ENCODE measurements at regions of chr17 and their contacts with region 1.

Region 1: GRCh38 chr17:55527540-55528118 is 16.4 kb upstream of the SMIM36 start:
- DNase-seq: peak; percentile 17 to 21
- H3K4me3 ChIP-seq: no peak overlapping the region
- H3K27ac ChIP-seq: no peak overlapping the region
- H3K4me1 ChIP-seq: no peaks in the 10 kb centered on the region
- H3K27me3 ChIP-seq: no peaks in the 10 kb centered on the region
- CTCF ChIP-seq: peak in 4 of 6 experiments; percentile 24 to 49 (median 41)
- POLR2A ChIP-seq: no peak

Region 2: DNA sequence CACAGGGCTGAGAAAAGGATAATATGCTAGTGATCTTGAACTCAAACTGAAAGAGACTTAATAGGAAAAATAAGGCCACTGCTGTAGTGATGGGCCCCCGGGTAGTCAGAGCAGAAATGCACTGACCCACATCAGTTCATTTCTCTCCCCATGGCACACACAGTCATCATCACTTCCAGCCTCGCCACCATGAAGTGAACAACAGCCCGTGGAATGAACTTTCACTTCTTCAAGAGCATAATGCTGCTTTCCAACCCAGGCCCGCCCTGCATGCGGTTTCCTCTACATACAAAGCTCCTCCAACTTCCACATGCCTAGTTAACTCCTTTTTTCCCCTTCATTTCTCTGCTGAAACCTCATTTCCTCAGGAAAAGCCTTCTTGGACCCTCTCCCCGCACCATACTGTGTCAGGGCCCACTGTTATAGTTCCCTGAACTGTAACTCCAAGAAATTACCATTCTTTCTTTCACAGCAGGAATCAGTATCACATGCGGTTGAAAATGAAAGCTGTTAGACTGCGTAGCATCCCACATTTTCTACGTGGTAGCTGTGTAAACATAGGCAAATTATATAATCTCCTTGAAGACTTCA is 49.5 kb after region 1 on chr17:
- intact Hi-C with region 1: no loop called
- DNase-seq: peak; percentile 6 to 14
- H3K4me3 ChIP-seq: no peak overlapping the region
- H3K27ac ChIP-seq: peak overlapping the region; percentile 39 to 69 (median 60)
- H3K4me1 ChIP-seq: peaks cover 0 to 5% of the 10 kb centered on the region in 2 donors
- H3K27me3 ChIP-seq: no peaks in the 10 kb centered on the region
- CTCF ChIP-seq: no peak
- POLR2A ChIP-seq: no peak

Region 3: DNA sequence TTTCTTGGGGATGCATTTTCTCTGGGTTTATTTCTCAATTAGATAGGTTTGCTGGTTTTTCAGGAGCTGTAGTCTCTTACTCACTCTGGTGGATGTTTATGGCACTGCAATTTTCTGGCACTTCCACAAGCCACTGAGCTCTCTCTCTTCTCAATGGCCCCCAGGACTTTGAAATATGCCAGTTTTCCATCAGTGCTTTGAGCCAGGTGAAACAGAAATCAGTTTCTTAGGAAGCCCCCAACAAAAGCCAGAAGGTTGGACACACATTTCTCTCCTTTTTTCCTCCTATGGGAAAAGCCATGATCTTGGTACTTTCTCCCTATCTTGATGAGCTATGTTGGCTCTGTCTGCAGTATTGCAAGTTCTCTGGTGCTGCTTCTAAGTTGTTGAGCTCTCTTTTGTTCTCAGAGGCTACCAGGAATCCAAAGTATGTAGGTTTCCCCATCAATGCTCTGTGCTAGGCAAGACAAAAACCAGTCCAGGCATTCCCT is 74.3 kb after region 1 on chr17:
- intact Hi-C with region 1: loop called (anchors 5 kb)
- DNase-seq: peak in 1 of 2 donors; percentile 15
- H3K4me3 ChIP-seq: no peak overlapping the region
- H3K27ac ChIP-seq: no peak overlapping the region
- H3K4me1 ChIP-seq: peaks cover 0 to 3% of the 10 kb centered on the region in 2 donors
- H3K27me3 ChIP-seq: no peaks in the 10 kb centered on the region
- CTCF ChIP-seq: peak in 5 of 6 experiments; percentile 34 to 70 (median 65)
- POLR2A ChIP-seq: no peak

Region 4: DNA sequence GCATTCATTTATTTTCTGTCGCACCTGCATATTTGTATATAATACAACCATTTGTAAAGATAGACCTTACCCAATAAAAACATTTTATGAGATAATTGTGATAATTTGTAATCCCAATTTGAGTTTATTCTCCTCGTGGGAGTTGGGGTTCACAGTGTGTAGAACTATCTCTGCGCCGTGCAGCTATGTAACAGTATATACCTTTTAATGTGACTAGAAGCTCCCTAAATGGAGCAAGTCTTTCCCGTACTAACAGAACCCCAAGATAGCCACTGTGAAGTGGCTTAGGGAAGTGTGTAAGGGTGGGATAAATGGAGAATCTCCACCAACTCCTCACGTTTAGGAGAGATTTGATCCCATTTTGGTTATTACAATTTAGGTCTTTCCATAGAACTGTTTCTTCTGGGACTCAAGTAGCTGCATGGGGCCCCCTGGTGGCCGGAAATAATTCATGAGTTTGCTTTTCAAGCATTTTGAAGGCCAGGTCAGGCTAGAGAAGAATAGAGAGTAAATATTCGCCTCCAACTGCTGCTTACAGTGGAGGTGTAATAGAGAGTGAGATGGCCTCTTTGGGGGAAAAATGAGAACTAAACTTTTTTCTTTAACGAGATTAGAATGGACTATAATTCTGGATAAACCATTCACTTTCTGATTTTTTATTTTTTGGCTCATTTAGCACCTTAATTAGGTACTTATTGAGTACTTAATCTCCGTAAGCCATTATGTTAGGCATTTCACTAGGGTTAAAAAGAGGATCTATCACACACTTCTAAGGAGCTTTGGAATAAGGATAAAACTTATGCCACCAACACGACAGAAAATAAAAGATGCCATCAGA is 190.5 kb after region 1 on chr17:
- intact Hi-C with region 1: loop called (anchors 5 kb)
- DNase-seq: peak; percentile 87 to 88
- H3K4me3 ChIP-seq: no peak overlapping the region
- H3K27ac ChIP-seq: no peak overlapping the region
- H3K4me1 ChIP-seq: peaks cover 0 to 7% of the 10 kb centered on the region in 2 donors
- H3K27me3 ChIP-seq: no peaks in the 10 kb centered on the region
- CTCF ChIP-seq: peak; percentile 54 to 77 (median 67)
- POLR2A ChIP-seq: no peak

Region 5: DNA sequence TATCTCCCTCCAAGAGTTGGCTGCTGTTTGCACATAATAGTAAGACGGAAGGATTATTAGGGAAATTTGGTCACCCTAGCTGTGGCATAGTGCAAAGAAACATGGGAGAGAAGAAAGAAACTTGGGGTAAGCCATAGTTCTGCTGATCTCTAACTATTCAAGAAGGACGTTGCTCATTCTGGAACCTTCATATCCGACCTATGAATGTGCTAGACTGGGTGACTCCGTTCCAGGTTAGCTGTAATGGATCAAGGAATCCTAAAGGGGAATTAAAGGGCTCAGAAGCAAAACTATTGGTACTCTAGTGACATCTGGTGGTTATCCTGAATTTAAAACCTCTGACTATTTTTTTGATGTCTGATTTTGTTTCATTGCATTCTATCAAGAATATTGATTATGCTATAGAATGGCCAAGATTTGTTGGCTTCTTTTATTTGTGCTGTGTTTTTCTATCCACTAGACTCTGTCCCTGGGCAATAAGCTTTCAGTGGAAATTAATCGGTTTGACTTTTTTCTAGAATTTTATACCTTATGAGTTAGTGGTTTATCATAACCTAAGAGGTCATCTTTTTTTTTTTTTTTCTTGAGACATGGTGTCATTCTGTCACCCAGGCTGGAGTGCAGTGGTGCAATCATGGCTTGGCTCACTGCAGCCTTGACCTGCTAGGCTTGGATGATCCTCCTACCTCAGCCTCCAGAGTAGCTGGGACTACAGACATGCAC is 242.7 kb after region 1 on chr17:
- intact Hi-C with region 1: loop called (anchors 2 kb)
- DNase-seq: no peak
- H3K4me3 ChIP-seq: no peak overlapping the region
- H3K27ac ChIP-seq: no peak overlapping the region
- H3K4me1 ChIP-seq: peaks cover 4 to 29% of the 10 kb centered on the region in 2 donors
- H3K27me3 ChIP-seq: no peaks in the 10 kb centered on the region
- CTCF ChIP-seq: peak; percentile 43 to 86 (median 62)
- POLR2A ChIP-seq: no peak

Measured in thyroid gland (tissue), 4 donors.